MCF 10A (cell line): ENCODE measurements at regions of chr1 and their contacts with region 1.

Region 1: GRCh38 chr1:24283326-24284155 is 35.6 kb upstream of the GRHL3 start:
- DNase-seq: peak; percentile 96
- H3K4me3 Mint-ChIP-seq: peak overlapping the region; percentile 18
- H3K27ac Mint-ChIP-seq: peak overlapping the region; percentile 86
- H3K4me1 Mint-ChIP-seq: peaks cover 31% of the 10 kb centered on the region
- H3K27me3 Mint-ChIP-seq: no peaks in the 10 kb centered on the region
- CTCF ChIP-seq: no peak

Region 2: GRCh38 chr1:24235921-24236781 is 47.4 kb before region 1 on chr1:
- CTCF ChIA-PET with region 1: interaction called, 3 read pairs
- POLR2A ChIA-PET with region 1: interaction called, 11 read pairs
- intact Hi-C with region 1: no loop called
- DNase-seq: peak; percentile 83
- H3K4me3 Mint-ChIP-seq: no peak overlapping the region
- H3K27ac Mint-ChIP-seq: peak overlapping the region; percentile 73
- H3K4me1 Mint-ChIP-seq: peaks cover 24% of the 10 kb centered on the region
- H3K27me3 Mint-ChIP-seq: no peaks in the 10 kb centered on the region
- CTCF ChIP-seq: no peak

Region 3: GRCh38 chr1:24301785-24302175 is 18.2 kb after region 1 on chr1:
- CTCF ChIA-PET with region 1: interaction called, 3 read pairs
- POLR2A ChIA-PET with region 1: interaction called, 35 read pairs
- intact Hi-C with region 1: no loop called
- DNase-seq: no peak
- H3K4me3 Mint-ChIP-seq: no peak overlapping the region
- H3K27ac Mint-ChIP-seq: peak overlapping the region; percentile 46
- H3K4me1 Mint-ChIP-seq: peaks cover 12% of the 10 kb centered on the region
- H3K27me3 Mint-ChIP-seq: no peaks in the 10 kb centered on the region
- CTCF ChIP-seq: no peak

Region 4: GRCh38 chr1:24374891-24375786 is 91.6 kb after region 1 on chr1:
- CTCF ChIA-PET with region 1: no interaction called
- POLR2A ChIA-PET with region 1: interaction called, 12 read pairs
- intact Hi-C with region 1: no loop called
- DNase-seq: peak; percentile 43
- H3K4me3 Mint-ChIP-seq: peak overlapping the region; percentile 56
- H3K27ac Mint-ChIP-seq: peak overlapping the region; percentile 99
- H3K4me1 Mint-ChIP-seq: peaks cover 35% of the 10 kb centered on the region
- H3K27me3 Mint-ChIP-seq: no peaks in the 10 kb centered on the region
- CTCF ChIP-seq: no peak